GM12878 (cell line): ENCODE measurements at regions of chr2 and their contacts with region 1.

Region 1: DNA sequence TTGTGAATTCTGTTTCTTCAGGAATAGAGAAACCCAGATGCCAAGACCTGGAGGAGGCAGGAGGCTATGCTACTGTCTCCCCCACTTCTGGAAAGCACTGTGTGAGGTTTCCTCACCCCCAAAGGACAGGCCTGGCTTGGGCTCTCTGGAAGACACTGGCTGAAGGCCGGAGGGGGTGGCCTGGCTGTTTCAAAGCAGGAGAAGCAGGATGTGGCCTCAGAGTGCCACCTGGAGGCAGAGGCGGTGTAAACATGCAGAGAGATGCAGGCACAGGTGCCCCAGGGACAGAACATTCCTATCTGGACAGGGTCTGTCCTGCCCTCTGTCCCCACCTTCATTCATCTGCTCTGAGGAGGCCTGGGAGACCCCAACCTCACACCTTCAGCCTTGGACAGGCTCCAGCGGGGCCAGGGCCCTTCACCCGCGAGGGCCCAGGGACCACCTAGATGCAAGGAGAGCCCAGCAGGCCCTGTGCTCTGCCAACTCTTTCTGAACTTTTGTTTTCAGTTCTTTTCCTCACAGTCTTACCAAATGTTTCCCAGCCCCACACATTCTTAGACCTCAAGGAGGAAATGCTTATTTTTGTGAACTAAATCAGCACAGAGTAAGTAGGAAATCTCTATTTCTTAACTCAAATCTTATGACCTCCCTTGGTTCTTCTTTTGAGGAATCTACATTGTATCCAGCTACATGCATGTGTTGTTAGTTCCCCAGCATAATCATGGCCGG is 79.2 kb downstream of the LONRF2 start:
- DNase-seq: no peak
- ATAC-seq: peak; percentile 82
- H3K4me3 ChIP-seq: no peak overlapping the region
- H3K27ac ChIP-seq: no peak overlapping the region
- H3K4me1 ChIP-seq: peaks cover 18% of the 10 kb centered on the region
- H3K27me3 ChIP-seq: 0 out of 4 replicates have a peak, but pooled peaks cover 2 to 5% of the 10 kb centered on the region in 2 experiments
- CTCF ChIP-seq: peak; percentile 77 to 81 (median 77)
- EP300 ChIP-seq: no peak
- POLR2A ChIP-seq: no peak
- RAD21 ChIP-seq: peak; percentile 91

Region 2: DNA sequence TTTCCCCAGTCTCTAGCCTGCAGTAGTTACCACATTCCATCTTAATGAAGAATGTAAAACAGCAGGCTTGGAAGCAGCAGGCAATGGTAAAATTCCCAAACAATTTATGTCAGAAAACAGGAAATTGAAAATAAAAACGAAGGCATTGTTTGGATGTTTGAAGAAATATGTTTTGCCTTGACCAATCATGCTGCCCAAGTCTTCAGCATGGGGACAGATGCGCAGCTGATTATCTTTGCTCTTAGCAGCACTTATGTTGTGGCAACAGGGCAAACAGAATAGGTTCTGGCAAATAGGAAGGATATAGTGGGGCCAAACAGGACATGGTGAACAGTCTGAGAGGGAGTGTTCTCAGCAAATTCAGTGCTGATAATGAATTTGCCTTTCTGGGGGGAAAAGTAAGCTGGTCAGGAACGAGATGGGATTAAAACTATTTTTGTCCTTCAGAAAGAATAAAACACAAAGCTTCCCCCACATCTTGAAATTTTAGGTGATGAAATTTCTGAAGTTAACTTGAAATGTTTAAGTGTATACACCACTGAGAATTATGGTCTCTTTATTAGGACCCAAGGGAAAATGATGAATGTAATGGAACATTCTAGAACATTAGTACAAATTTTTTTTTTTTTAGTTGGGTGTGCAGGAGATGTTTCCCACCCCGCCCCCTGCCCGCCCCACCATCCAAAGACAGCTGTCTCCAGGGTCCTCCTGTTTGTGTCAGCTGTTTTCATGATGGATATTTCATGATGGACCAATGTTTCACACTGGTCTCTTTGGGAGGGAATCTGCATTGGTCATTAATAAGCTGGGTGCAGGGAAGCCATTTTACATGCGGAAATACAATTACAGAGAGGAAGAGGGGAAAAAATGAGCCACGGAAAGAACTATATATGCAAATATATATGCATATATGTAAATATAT is 513.7 kb before region 1 on chr2:
- CTCF ChIA-PET with region 1: no interaction called
- POLR2A ChIA-PET with region 1: no interaction called
- RAD21 ChIA-PET with region 1: no interaction called
- SMC1A ChIA-PET with region 1: no interaction called
- in situ Hi-C with region 1: no loop called
- intact Hi-C with region 1: loop called (anchors 10 kb)
- DNase-seq: no peak
- ATAC-seq: no peak
- H3K4me3 ChIP-seq: no peak overlapping the region
- H3K27ac ChIP-seq: no peak overlapping the region
- H3K4me1 ChIP-seq: no peaks in the 10 kb centered on the region
- H3K27me3 ChIP-seq: no peaks in the 10 kb centered on the region
- CTCF ChIP-seq: no peak
- EP300 ChIP-seq: no peak
- POLR2A ChIP-seq: no peak
- RAD21 ChIP-seq: no peak

Region 3: GRCh38 chr2:99818842-99819241 is 424.2 kb before region 1 on chr2:
- CTCF ChIA-PET with region 1: interaction called, 3 read pairs
- POLR2A ChIA-PET with region 1: no interaction called
- RAD21 ChIA-PET with region 1: no interaction called
- SMC1A ChIA-PET with region 1: no interaction called
- in situ Hi-C with region 1: no loop called
- intact Hi-C with region 1: loop called (anchors 10 kb)
- DNase-seq: no peak
- ATAC-seq: no peak
- H3K4me3 ChIP-seq: no peak overlapping the region
- H3K27ac ChIP-seq: no peak overlapping the region
- H3K4me1 ChIP-seq: no peaks in the 10 kb centered on the region
- H3K27me3 ChIP-seq: no peaks in the 10 kb centered on the region
- CTCF ChIP-seq: no peak; a peak in 1 of 6 replicates
- EP300 ChIP-seq: no peak
- POLR2A ChIP-seq: no peak
- RAD21 ChIP-seq: peak; percentile 39

Region 4: GRCh38 chr2:100142393-100142792 is 100.7 kb before region 1 on chr2 and contains the start of gene AFF3:
- CTCF ChIA-PET with region 1: no interaction called
- POLR2A ChIA-PET with region 1: no interaction called
- RAD21 ChIA-PET with region 1: no interaction called
- SMC1A ChIA-PET with region 1: no interaction called
- in situ Hi-C with region 1: no loop called
- intact Hi-C with region 1: loop called (anchors 2 kb)
- DNase-seq: peak; percentile 56
- ATAC-seq: peak; percentile 98
- H3K4me3 ChIP-seq: peak within 1 kb of the TSS; percentile 51
- H3K27ac ChIP-seq: peak within 1 kb of the TSS; percentile 73
- H3K4me1 ChIP-seq: peaks cover 20% of the 10 kb centered on the region
- H3K27me3 ChIP-seq: peaks cover under 1 to 3% of the 10 kb centered on the region in 2 experiments; a peak in 1 of 4 replicates
- CTCF ChIP-seq: no peak
- EP300 ChIP-seq: peak; percentile 74; a peak in 3 of 4 replicates
- POLR2A ChIP-seq: peak; percentile 61
- RAD21 ChIP-seq: peak; percentile 30
- polyA plus RNA-seq, gene AFF3: 0.26 to 0.31 TPM

Region 5: DNA sequence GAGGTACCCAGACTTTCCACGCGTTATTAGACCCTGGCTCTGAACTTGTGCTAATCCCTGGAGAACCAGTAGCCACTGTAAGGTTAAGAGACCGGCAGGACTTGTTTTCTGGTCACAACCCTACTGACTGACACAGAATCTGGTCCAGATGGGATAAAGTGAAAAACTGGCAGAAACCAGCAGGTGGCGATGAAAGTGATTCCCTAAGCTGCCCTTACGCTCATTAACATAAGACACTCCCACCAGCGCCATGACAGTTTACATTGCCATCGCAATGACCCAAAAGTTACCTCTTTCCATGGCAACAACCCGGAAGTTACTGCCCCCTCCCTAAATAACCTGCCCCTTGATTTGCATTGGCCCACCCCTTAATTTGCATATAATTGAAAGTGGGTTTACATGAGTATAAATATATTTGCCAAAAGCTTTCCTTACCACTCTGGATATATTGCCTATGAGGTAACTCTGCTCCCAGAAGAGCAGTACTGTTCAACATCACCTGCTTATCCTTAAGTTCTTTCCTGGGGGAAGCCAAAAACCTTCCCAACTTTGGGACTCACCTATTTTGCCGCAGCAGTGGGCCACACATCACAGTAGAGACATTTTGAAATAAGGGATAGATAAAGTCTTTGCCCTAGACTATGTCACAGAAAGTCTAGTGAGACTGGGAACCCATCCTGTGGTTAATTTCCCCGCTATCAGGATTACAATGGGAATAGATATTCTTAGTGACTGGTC is 64.8 kb before region 1 on chr2:
- CTCF ChIA-PET with region 1: no interaction called
- POLR2A ChIA-PET with region 1: no interaction called
- RAD21 ChIA-PET with region 1: no interaction called
- SMC1A ChIA-PET with region 1: no interaction called
- in situ Hi-C with region 1: no loop called
- intact Hi-C with region 1: loop called (anchors 1 kb)
- DNase-seq: peak; percentile 5
- ATAC-seq: peak; percentile 81
- H3K4me3 ChIP-seq: no peak overlapping the region
- H3K27ac ChIP-seq: no peak overlapping the region
- H3K4me1 ChIP-seq: no peaks in the 10 kb centered on the region
- H3K27me3 ChIP-seq: 0 out of 4 replicates have a peak, but pooled peaks cover 0 to 2% of the 10 kb centered on the region in 2 experiments
- CTCF ChIP-seq: peak in 2 of 3 experiments; percentile 34 to 52; a peak in 3 of 6 replicates
- EP300 ChIP-seq: no peak
- POLR2A ChIP-seq: no peak
- RAD21 ChIP-seq: no peak

Region 6: DNA sequence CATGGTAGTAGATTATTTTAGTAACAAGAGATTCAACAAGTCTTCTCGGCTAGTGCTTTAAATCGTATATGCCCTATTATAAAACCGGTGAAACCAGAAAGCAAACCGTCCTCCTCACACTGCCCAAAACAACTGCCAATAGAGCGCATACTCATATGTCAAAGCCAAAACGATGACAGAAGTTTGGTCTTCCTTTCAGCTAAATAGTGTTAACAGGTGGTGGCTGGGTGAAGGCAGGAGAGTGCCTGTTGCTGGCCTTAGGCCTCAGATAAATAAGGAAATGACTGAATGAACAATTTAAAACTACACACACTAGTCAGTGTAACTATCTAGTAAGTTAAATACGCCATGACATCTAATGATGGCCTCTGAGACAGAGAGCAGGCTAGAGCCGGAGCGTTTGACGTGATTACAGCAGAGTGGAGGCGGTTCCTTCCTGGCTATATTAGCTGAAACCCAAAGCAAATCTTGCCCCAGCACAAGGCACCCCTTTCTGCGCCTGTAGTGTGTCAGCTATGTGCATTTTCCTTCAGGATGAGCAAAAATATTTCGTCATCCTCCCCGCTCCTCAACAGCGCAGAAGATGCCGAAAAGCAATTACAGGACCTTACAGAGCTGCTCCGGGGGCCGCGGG is 77.6 kb after region 1 on chr2:
- CTCF ChIA-PET with region 1: no interaction called
- POLR2A ChIA-PET with region 1: no interaction called
- RAD21 ChIA-PET with region 1: no interaction called
- SMC1A ChIA-PET with region 1: no interaction called
- in situ Hi-C with region 1: no loop called
- intact Hi-C with region 1: no loop called
- DNase-seq: no peak
- ATAC-seq: no peak
- H3K4me3 ChIP-seq: no peak overlapping the region
- H3K27ac ChIP-seq: no peak overlapping the region
- H3K4me1 ChIP-seq: no peaks in the 10 kb centered on the region
- H3K27me3 ChIP-seq: peaks cover 3 to 20% of the 10 kb centered on the region in 2 experiments; a peak in 3 of 4 replicates
- CTCF ChIP-seq: no peak
- EP300 ChIP-seq: no peak
- POLR2A ChIP-seq: no peak
- RAD21 ChIP-seq: no peak